ENCODE measurements at regions of chr1 and their contacts with region 1.

Region 1: DNA sequence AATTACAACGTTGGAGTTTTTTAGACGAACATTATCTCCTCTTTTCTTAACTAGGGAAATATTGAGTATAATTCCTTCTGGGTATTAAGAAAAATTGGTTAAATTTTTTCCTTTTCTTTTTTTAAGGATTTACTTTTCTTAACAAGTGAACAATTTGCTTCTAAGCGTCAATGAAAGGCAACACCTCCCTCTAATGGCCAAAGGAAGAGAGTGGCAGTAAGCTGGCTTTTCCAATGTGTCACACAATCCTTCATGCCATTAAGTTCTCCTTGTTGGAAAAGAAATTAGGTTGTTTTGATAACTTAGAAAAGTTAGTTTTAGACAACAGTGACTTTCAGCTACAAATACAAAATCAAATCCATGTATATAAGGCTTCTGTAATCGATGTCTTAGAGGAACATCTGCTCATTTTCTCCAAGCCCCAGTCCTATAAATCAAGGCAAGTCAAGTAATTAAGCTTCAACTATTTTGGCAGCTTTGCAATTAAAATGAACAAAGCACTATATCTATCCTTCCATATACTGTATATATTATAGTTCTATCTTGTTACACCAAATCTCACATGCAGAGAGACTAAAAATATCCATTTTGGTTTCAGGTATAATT is 62.8 kb downstream of the EDEM3 start:
- DNase-seq: no peak
- ATAC-seq: no peak
- H3K4me3 Mint-ChIP-seq: no peak overlapping the region
- H3K27ac Mint-ChIP-seq: no peak overlapping the region
- H3K4me1 Mint-ChIP-seq: peaks cover 14% of the 10 kb centered on the region
- H3K27me3 Mint-ChIP-seq: no peaks in the 10 kb centered on the region
- CTCF ChIP-seq: peak; percentile 48; the same call in 1 of the 2 replicates

Region 2: DNA sequence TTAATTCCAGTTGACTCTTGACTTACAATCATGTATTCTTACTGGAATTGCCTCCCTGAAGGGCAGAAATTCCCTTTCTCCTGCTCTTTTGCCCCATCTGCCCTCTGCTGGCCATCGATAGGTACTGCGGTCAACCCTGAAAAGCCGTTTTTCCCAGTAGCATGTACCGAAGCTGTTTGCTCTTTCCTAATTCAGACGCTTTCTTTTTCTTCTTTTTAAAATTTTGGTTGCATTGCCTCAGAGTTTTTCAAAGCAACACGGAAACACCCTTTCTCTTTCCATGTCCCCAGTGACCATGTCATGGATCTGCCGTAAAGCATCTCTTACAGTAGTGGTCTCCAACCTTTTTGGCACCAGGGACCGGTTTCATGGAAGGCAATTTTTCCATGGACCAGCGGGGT is 469.2 kb before region 1 on chr1:
- CTCF ChIA-PET with region 1: interaction called, 12 read pairs
- POLR2A ChIA-PET with region 1: no interaction called
- DNase-seq: peak; percentile 71
- ATAC-seq: peak; percentile 55; the same call in 1 of the 2 replicates
- H3K4me3 Mint-ChIP-seq: no peak overlapping the region
- H3K27ac Mint-ChIP-seq: no peak overlapping the region
- H3K4me1 Mint-ChIP-seq: 0 out of 2 replicates have a peak, but pooled peaks cover 3% of the 10 kb centered on the region
- H3K27me3 Mint-ChIP-seq: peaks cover 30% of the 10 kb centered on the region
- CTCF ChIP-seq: peak; percentile 81

Region 3: GRCh38 chr1:184242507-184242943 is 449.3 kb before region 1 on chr1:
- CTCF ChIA-PET with region 1: interaction called, 23 read pairs
- POLR2A ChIA-PET with region 1: no interaction called
- DNase-seq: no peak
- ATAC-seq: peak; percentile 71
- H3K4me3 Mint-ChIP-seq: no peak overlapping the region
- H3K27ac Mint-ChIP-seq: no peak overlapping the region
- H3K4me1 Mint-ChIP-seq: no peaks in the 10 kb centered on the region
- H3K27me3 Mint-ChIP-seq: no peaks in the 10 kb centered on the region; the same call in 1 of the 2 replicates
- CTCF ChIP-seq: no peak

Region 4: GRCh38 chr1:184672013-184672726 is 19.7 kb before region 1 on chr1:
- CTCF ChIA-PET with region 1: interaction called, 61 read pairs
- POLR2A ChIA-PET with region 1: no interaction called
- DNase-seq: no peak
- ATAC-seq: peak; percentile 18
- H3K4me3 Mint-ChIP-seq: no peak overlapping the region
- H3K27ac Mint-ChIP-seq: peak overlapping the region; percentile 79
- H3K4me1 Mint-ChIP-seq: peaks cover 62% of the 10 kb centered on the region
- H3K27me3 Mint-ChIP-seq: no peaks in the 10 kb centered on the region
- CTCF ChIP-seq: no peak

Region 5: DNA sequence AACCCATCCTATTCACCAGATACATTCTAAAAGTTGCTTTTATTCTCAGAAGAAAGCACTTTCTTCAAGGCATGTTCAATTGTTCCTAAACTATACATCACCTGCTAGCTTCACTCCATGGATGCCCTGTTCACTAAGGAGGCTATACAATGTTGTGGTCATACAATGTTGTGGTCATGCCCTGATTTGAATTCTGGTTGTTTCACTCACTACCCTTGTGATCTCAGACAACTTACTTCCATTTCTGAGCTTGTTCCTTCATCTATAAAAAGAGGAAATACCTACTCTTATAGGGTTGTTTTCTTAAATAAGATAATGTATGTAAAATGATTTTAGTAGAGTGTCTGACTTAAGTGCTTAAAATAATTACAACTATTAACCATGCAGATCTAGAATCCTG is 43.2 kb after region 1 on chr1:
- CTCF ChIA-PET with region 1: no interaction called
- POLR2A ChIA-PET with region 1: no interaction called
- DNase-seq: no peak
- ATAC-seq: no peak
- H3K4me3 Mint-ChIP-seq: no peak overlapping the region
- H3K27ac Mint-ChIP-seq: no peak overlapping the region
- H3K4me1 Mint-ChIP-seq: no peaks in the 10 kb centered on the region
- H3K27me3 Mint-ChIP-seq: no peaks in the 10 kb centered on the region
- CTCF ChIP-seq: no peak

Region 6: GRCh38 chr1:185080422-185080821 is 388.6 kb after region 1 on chr1:
- CTCF ChIA-PET with region 1: no interaction called
- POLR2A ChIA-PET with region 1: no interaction called
- DNase-seq: no peak
- ATAC-seq: no peak
- H3K4me3 Mint-ChIP-seq: no peak overlapping the region
- H3K27ac Mint-ChIP-seq: peak overlapping the region; percentile 60
- H3K4me1 Mint-ChIP-seq: peaks cover 54% of the 10 kb centered on the region
- H3K27me3 Mint-ChIP-seq: no peaks in the 10 kb centered on the region
- CTCF ChIP-seq: no peak

Measured in WTC11 (cell line).